ENCODE measurements at regions of chr2 and their contacts with region 1.

Region 1: DNA sequence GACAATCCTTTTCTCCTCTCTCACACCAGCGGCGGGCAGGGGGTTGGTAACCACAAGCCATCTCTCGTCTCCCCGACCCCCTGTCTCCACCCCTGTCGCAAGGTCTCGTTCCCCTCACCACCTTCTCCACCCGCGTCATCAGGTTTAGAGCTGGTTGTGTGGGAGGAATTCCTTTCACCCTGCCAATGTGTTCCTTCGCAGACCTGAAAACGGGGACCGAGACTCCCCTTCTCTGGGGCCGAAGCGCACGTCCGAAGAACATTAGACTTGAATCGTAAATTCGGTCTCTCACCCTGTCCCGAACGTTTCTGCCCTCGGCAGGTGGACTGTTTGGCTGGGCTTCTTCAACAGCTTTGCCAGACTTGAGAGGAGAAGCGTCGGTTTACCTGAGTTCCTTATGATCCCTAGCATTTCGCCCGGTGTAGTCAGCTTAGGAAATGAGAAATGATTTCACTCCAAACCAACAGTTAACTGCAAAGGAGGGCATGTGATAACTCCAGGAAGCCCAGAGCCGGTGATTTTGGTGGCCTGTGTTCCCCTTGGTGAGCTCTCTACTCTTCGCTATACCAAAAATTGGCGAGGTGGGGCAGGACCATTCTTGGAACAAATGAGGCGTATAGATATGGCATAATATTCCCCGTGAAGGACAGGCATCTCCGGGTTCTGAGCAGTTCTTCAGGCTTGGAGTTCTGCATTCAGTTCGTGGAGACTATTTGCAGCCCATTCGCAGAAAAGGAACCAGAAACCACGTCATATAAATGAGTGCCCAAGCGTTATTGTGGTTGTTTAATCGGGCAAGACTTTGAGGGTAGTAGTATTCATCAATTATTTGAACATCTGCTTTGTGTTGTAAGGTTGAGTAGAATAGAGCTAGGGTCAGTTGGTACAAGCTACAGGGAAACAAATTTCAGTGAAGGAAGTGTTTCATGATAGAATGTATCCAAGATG is 694 bp downstream of the CFAP36 start:
- DNase-seq: no peak
- ATAC-seq: no peak
- H3K4me3 Mint-ChIP-seq: peak overlapping the region; percentile 97
- H3K27ac Mint-ChIP-seq: peak overlapping the region; percentile 97
- H3K4me1 Mint-ChIP-seq: peaks cover 10% of the 10 kb centered on the region
- H3K27me3 Mint-ChIP-seq: no peaks in the 10 kb centered on the region

Region 2: DNA sequence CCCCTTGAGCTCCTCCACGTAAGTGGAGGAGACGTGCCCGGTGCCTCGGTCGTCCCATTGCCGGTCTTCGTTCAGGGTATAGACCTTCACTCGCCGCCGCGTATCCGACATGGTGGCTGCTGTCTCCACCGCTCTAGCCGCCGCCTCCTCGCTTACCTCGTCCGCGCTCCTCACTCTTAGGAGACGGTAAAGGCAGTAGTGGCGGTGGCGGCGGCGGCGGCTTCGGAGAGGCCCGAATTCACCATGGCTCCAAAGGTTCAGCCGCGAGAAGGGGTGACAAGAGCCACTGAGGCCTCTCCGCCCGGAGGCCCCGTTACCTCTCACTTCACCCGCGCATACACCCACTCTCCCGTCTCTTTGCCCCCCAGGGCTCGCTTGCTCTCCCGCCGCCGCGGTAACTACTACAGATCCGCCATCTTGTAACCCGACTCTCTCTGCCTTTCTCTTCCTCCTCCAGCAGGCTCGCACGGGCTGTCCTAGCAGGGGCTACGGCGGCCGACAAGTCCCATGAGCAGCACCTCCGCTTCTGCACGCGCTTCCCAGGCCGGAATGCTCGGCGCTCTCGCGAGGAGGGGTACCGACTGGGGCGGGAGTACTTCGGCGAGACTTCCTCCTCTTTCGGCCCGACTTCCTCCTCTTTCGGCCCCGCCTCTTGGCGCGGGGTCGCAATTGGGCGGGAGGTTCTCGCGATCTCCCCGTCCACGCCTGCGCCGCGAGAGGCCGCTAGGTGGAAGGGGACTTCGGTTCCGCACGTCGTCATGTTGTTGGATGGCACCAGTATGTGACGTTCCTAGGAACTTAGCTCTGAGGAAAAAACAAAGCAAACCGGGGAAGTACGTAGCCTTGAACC is 97.2 kb after region 1 on chr2 and contains the start of gene PPP4R3B:
- POLR2A ChIA-PET with region 1: interaction called, 20 read pairs
- DNase-seq: peak; percentile 96
- ATAC-seq: peak; percentile 93
- H3K4me3 Mint-ChIP-seq: no peak within 1 kb of the TSS
- H3K27ac Mint-ChIP-seq: no peak within 1 kb of the TSS
- H3K4me1 Mint-ChIP-seq: peaks cover 24% of the 10 kb centered on the region
- H3K27me3 Mint-ChIP-seq: no peaks in the 10 kb centered on the region
- total RNA-seq, gene PPP4R3B: 78.1 to 81.7 TPM